Breast epithelium (tissue), 4 donors: ENCODE measurements at regions of chr11 and their contacts with region 1.

Region 1: GRCh38 chr11:91433284-91434010 is 791.2 kb upstream of the FAT3 start:
- DNase-seq: no peak
- H3K4me3 ChIP-seq: no peak overlapping the region
- H3K27ac ChIP-seq: no peak overlapping the region
- H3K4me1 ChIP-seq: no peaks in the 10 kb centered on the region
- H3K27me3 ChIP-seq: no peaks in the 10 kb centered on the region
- CTCF ChIP-seq: no peak
- POLR2A ChIP-seq: no peak

Region 2: GRCh38 chr11:90629229-90629806 is 804.1 kb before region 1 on chr11:
- intact Hi-C with region 1: loop called (anchors 5 kb)
- DNase-seq: no peak
- H3K4me3 ChIP-seq: no peak overlapping the region
- H3K27ac ChIP-seq: no peak overlapping the region
- H3K4me1 ChIP-seq: no peaks in the 10 kb centered on the region
- H3K27me3 ChIP-seq: no peaks in the 10 kb centered on the region
- CTCF ChIP-seq: no peak
- POLR2A ChIP-seq: no peak

Region 3: DNA sequence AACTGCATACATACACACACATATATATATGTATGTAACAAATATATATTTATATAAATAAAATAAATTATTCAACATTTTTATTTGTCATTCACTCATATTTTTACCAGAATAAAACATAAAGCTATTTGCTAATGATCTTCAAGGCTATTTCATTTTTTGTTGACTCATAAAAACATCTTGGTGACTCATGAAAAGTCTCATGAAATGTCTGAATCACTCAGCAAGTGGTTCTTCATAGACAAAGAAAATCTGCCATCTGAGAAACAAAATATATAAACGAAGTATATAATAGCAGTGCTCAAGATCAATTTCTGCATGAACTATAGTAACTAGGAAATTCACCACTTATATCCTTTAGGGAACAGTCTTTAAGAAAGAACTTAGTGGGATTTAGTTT is 26.4 kb after region 1 on chr11:
- intact Hi-C with region 1: no loop called
- DNase-seq: no peak
- H3K4me3 ChIP-seq: no peak overlapping the region
- H3K27ac ChIP-seq: no peak overlapping the region
- H3K4me1 ChIP-seq: no peaks in the 10 kb centered on the region
- H3K27me3 ChIP-seq: no peaks in the 10 kb centered on the region
- CTCF ChIP-seq: no peak
- POLR2A ChIP-seq: no peak

Region 4: GRCh38 chr11:92253945-92254344 is 820.5 kb after region 1 on chr11:
- intact Hi-C with region 1: no loop called
- DNase-seq: no peak
- H3K4me3 ChIP-seq: no peak overlapping the region
- H3K27ac ChIP-seq: no peak overlapping the region
- H3K4me1 ChIP-seq: no peaks in the 10 kb centered on the region
- H3K27me3 ChIP-seq: no peaks in the 10 kb centered on the region
- CTCF ChIP-seq: no peak
- POLR2A ChIP-seq: no peak